ENCODE measurements at regions of chr5 and their contacts with region 1.

Region 1: DNA sequence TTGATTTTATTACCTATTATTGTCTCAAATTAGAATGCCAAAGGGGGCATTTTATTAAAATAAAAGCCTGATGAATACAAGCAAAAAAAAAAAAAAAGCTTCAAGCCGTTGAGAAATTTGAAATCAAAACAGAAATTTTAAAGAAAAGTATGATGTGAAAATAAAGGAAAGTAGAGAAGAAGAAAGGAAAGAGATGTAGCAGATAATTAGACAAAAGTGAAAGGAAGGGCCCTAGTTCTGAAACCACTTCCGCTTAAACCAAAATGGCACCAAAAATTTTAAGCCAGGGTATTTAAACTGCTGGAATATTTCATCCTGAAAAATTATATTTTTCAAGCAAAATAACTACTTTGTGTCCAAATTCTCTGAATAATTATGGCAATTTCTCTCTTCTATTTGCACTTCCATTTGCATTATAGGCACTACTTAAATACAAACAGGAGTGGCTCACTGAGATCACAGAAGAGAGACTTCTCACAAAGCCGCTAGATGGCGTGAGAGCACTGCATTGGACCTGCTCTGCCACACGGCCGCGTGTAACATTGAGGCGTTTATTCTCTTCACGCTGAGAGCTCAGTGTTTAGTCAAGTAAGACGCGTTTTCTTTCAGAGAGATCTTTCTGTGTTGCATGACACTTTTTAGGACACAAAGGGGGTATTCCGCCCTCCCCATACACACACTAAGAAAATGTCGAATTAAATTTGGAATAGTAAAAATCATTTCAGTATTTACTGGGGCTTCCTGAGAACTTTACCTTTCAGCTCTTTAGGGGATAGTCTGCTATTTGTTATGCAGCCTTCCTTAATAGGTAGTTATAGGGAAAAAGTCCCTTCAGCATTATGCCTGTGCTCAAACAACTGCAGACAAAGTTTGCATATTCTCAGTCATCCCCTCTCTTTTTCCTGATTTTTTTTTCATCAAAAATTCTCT is 368.4 kb upstream of the CCNH start:
- DNase-seq: peak; percentile 49
- ATAC-seq: peak; percentile 99
- H3K4me3 Mint-ChIP-seq: no peak overlapping the region
- H3K27ac Mint-ChIP-seq: no peak overlapping the region
- H3K4me1 Mint-ChIP-seq: peaks cover 2% of the 10 kb centered on the region
- H3K27me3 Mint-ChIP-seq: peaks cover 15% of the 10 kb centered on the region
- CTCF ChIP-seq: peak; percentile 86

Region 2: DNA sequence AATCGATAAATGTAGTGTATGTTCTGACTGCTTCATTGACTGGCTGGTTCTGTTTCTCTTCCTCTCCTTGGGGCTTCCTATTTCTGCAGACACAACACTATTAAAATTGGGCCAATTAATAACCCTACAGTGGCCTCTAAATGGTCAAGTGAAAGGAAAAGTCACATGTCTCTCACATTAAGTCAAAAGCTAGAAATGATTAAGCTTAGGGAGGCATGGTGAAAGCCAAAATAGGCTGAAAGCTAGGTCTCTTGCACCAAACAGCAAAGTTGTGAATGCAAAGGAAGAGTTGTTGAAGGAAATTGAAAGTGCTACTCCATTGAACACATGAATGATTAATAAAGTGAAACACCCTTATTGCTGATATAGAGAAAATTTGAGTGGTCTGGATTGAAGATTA is 426.6 kb before region 1 on chr5:
- CTCF ChIA-PET with region 1: no interaction called
- POLR2A ChIA-PET with region 1: no interaction called
- intact Hi-C with region 1: no loop called
- DNase-seq: no peak
- ATAC-seq: no peak
- H3K4me3 Mint-ChIP-seq: no peak overlapping the region
- H3K27ac Mint-ChIP-seq: no peak overlapping the region
- H3K4me1 Mint-ChIP-seq: peaks cover 16% of the 10 kb centered on the region
- H3K27me3 Mint-ChIP-seq: no peaks in the 10 kb centered on the region
- CTCF ChIP-seq: no peak

Region 3: DNA sequence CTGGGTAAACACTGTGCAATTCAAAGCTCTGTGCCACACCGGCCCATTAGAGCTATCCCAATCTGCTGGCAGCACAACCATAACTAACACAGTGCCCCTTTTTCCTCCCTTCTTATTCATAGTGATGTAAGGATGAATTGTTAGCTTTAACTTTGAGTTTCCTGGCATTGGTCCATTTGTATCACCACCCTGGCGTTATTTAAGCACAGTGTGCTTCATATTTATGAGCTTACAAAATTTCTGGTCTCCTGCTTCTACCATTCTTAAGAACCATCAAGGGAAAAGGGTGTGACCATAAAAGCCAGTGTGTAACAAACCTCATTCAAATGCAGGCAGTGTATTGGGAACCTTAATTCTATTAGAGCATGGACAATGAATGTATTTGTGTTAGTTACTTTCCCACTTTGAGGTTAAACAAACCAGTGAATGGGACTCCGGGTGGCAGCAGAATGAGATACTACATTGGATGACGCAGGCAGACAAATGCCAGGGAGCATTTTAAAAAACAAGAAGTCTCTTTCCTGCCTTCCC is 264.9 kb after region 1 on chr5:
- CTCF ChIA-PET with region 1: no interaction called
- POLR2A ChIA-PET with region 1: no interaction called
- intact Hi-C with region 1: no loop called
- DNase-seq: no peak
- ATAC-seq: no peak
- H3K4me3 Mint-ChIP-seq: no peak overlapping the region
- H3K27ac Mint-ChIP-seq: no peak overlapping the region
- H3K4me1 Mint-ChIP-seq: no peaks in the 10 kb centered on the region
- H3K27me3 Mint-ChIP-seq: no peaks in the 10 kb centered on the region
- CTCF ChIP-seq: no peak

Region 4: DNA sequence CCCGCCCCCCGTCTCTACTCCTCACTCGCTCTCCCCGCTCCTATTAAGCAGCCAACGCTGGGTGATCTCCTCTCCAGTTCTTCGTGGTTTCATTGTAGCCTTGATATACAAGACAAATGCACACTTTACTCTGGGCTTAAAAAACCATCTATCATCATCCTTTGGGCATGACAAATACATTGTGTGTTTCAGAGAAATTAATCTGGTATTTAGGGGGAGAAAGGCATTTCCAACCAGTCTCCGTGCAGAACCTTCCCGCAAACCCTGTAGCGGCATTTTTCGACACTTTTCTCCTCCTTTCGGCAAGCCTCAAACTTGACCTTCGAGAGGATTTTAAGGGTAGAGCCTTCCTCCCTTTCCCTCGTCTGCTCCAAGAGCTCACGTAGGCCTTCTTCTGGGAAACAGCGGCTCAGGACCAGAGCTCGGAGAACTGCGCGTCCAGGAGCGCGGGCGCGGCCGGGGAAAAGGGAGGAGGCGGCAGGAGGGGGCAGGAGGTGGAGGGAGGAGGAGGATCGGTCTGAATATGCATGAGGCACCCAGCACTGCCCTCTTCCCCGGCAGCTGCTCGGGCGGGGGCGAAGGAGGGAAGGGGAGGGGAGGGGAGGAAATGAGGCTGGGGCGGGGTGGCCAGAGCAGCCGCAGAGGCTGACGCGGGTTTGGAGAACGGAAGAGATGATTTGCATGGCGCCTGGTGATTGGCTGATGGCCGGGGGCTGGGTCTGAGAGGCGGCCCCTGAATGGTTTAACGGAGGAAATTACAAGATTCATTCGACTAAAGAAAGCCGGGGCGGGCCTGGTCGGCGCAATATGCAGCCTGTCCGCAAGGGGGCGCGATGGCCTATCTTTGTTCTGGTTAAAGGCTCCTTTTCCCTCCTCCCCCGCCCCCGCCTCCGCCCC is 360.0 kb after region 1 on chr5:
- CTCF ChIA-PET with region 1: no interaction called
- POLR2A ChIA-PET with region 1: no interaction called
- intact Hi-C with region 1: loop called (anchors 10 kb)
- DNase-seq: no peak
- ATAC-seq: peak; percentile 49
- H3K4me3 Mint-ChIP-seq: no peak overlapping the region
- H3K27ac Mint-ChIP-seq: no peak overlapping the region
- H3K4me1 Mint-ChIP-seq: peaks cover 11% of the 10 kb centered on the region
- H3K27me3 Mint-ChIP-seq: peaks cover 34% of the 10 kb centered on the region
- CTCF ChIP-seq: no peak

Measured in activated B cell treated with CpG ODN at 0.5 μM for 24 hours (primary cell).